Psoas muscle (tissue), 8 donors: ENCODE measurements at regions of chr22 and their contacts with region 1.

Region 1: GRCh38 chr22:49767355-49768062 is 60.2 kb downstream of the BRD1 start:
- DNase-seq: peak; percentile 14 to 52
- ATAC-seq: peak; percentile 18 to 63 (median 25)
- H3K4me3 ChIP-seq: no peak overlapping the region
- H3K27ac ChIP-seq: no peak overlapping the region
- H3K4me1 ChIP-seq: peaks cover 10% of the 10 kb centered on the region
- H3K27me3 ChIP-seq: no peaks in the 10 kb centered on the region
- CTCF ChIP-seq: peak; percentile 68

Region 2: DNA sequence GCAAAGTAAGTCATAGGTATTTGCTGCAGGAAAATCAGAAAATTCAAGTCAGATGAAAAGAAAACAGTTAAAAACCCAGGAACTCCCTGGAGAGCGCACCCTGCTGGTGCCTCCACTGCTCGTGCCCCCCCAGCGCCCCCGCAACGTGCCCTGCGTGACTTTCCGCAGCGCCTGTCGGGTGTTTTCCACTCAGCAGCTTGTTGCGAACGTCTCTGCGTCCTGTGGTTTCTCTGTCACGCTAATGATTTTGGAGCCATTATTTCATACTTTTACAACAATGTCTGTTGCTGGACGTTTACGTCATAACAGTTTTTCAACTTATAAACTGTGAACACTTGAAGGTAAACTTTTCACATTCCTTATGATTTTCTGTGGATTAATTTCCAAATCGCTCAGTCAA is 155.9 kb after region 1 on chr22:
- intact Hi-C with region 1: loop called in 1 of 2 experiments (anchors 5 kb)
- DNase-seq: no peak
- ATAC-seq: no peak
- H3K4me3 ChIP-seq: no peak overlapping the region
- H3K27ac ChIP-seq: no peak overlapping the region
- H3K4me1 ChIP-seq: peaks cover 4% of the 10 kb centered on the region
- H3K27me3 ChIP-seq: no peaks in the 10 kb centered on the region
- CTCF ChIP-seq: no peak

Region 3: DNA sequence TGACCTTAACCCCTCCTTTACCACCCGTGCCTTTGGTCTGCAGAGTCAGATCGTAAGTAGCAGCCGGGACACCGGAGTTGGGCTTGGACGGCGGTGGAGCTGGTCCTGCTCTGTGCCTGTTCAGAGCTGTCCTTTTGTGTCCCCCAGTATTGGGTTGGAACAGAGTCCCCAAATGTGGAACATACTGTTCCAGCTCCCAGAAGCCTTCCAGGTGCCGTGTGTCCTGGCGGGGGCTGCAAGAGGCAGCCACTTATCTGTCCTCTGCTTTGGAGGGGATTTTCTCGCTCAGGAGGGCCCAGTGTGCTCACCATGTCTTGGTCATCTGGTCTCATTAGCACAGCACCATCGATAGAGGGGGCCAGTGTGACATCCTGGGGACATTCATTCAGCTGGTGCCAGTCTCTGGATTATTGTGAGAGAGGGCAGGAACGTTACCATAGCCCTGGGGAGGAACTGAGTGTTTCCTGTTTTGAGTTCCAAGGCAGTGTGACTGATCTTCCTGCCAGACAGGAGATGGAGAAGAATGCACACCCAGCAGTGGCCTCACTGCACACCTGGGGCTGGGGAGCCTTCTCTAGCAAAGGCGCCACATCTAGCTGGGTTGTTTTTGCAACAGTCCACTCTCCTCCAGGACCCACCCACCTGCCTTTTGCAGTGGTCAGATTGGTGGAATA is 163.4 kb after region 1 on chr22:
- intact Hi-C with region 1: loop called in 1 of 2 experiments (anchors 1 kb)
- DNase-seq: peak; percentile 60 to 83
- ATAC-seq: peak; percentile 36 to 59 (median 50)
- H3K4me3 ChIP-seq: no peak overlapping the region
- H3K27ac ChIP-seq: peak overlapping the region; percentile 19
- H3K4me1 ChIP-seq: peaks cover 43% of the 10 kb centered on the region
- H3K27me3 ChIP-seq: peaks cover 0 to 5% (median 0%) of the 10 kb centered on the region in 3 donors
- CTCF ChIP-seq: peak; percentile 66

Region 4: DNA sequence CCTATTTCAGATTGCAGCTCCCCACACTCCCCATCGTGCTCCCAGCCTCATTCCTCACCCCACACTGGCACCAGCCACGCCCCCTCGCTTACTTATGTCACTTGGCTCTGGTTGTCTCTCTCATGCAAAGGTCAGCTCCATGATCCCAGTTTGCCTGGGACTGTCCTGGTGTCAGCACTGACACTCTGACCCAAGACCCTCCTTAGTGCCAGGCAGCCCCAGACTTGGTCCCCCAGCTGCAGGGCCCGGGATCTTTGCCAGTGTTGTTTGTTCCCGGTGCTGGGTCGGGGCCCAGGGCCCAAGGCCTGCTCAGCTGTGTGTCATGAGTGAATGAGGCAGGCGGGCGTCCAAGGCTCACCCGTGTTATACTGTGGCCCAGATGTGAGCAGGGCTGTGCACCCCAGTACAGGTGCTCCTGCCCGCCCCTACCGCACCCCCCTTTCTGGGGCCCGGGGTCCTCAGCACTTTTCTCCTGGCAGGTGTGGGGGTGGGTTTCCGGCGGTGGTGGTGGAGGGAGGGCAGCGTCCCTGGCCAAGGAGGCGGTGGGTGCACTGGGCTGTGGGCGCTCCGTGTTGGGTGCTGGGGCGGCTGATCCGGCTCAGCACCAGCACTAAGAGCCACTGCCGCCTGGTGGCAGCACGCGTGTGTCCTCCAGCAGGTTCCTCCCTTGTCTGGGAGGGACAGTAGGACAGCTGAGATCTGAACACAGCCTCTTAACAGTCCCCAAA is 225.6 kb after region 1 on chr22:
- intact Hi-C with region 1: loop called in 1 of 2 experiments (anchors 10 kb)
- DNase-seq: peak; percentile 63 to 84
- ATAC-seq: peak; percentile 90 to 97 (median 91)
- H3K4me3 ChIP-seq: no peak overlapping the region
- H3K27ac ChIP-seq: no peak overlapping the region
- H3K4me1 ChIP-seq: peaks cover 5% of the 10 kb centered on the region
- H3K27me3 ChIP-seq: no peaks in the 10 kb centered on the region
- CTCF ChIP-seq: peak; percentile 73

Region 5: GRCh38 chr22:50030297-50031188 is 263.0 kb after region 1 on chr22:
- intact Hi-C with region 1: loop called (anchors 5 kb)
- DNase-seq: peak; percentile 76 to 86
- ATAC-seq: peak; percentile 86 to 97 (median 86)
- H3K4me3 ChIP-seq: no peak overlapping the region
- H3K27ac ChIP-seq: no peak overlapping the region
- H3K4me1 ChIP-seq: peaks cover 6% of the 10 kb centered on the region
- H3K27me3 ChIP-seq: peaks cover 0 to 56% (median 16%) of the 10 kb centered on the region in 3 donors
- CTCF ChIP-seq: peak; percentile 91

Region 6: DNA sequence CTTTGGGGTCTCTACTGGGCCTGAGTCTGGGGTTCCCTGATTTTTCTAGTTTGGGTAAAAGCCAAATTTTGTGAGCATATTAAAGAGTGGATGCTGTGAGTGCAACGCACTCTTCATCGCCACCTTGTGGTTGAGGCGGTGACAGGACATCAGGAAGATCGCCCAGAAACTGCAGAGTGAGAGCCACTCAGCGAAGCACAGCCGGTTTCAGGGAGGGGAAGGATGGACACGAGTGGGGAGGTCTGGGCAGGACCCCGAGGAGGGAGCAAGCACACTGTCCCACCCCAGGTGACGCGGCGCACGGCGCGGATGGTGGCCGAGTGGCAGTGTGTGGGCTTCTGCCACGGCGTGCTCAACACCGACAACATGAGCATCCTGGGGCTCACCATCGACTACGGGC is 442.4 kb after region 1 on chr22:
- intact Hi-C with region 1: loop called in 1 of 2 experiments (anchors 5 kb)
- DNase-seq: peak; percentile 69 to 84
- ATAC-seq: peak; percentile 34 to 60 (median 44)
- H3K4me3 ChIP-seq: no peak overlapping the region
- H3K27ac ChIP-seq: no peak overlapping the region
- H3K4me1 ChIP-seq: peaks cover 23% of the 10 kb centered on the region
- H3K27me3 ChIP-seq: no peaks in the 10 kb centered on the region
- CTCF ChIP-seq: peak; percentile 78